Activated CD4-positive, alpha-beta T cell treated with anti-CD3 and anti-CD28 coated beads for 36 hours (primary cell): ENCODE measurements at regions of chr16 and their contacts with region 1.

Region 1: DNA sequence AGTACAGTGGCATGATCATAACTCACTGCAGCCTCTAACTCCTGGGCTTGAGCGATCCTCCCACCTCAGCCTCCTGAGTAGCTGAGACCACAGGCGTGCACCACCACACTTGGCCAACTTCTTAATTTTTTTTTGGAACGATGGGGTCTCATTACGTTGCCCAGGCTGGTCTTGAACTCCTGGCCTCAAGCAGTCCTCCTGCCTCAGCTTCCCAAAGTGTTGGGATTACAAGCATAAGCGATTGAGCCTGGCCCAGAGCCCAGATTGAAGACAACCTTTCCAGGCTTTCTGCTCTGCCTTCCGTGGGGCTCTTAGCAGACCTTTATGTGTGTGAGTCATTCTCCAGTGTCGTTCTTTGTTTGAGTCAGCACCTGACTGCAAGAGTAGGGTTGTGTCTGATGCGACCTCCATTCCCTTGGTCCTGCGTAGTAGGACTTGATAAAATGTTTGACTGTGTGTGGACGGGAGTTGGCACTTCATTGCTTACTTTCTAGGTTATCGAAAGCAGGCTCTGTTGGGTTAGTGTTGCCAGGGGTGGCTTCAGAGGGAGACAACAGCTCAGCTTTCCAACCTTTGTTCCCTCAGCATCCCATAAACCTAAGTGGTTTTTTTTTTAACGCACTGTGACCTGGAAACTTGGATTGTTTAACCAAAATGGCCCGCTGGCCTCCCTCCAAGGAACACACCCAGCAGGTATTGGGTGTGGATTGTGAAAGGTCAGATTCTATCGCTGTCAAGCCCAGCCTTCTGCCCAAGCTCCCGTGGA is 26.4 kb downstream of the EEF2K start:
- DNase-seq: peak; percentile 68
- ATAC-seq: peak; percentile 100
- H3K4me3 Mint-ChIP-seq: no peak overlapping the region
- H3K27ac Mint-ChIP-seq: peak overlapping the region; percentile 51
- H3K4me1 Mint-ChIP-seq: peaks cover 11% of the 10 kb centered on the region
- H3K27me3 Mint-ChIP-seq: no peaks in the 10 kb centered on the region

Region 2: DNA sequence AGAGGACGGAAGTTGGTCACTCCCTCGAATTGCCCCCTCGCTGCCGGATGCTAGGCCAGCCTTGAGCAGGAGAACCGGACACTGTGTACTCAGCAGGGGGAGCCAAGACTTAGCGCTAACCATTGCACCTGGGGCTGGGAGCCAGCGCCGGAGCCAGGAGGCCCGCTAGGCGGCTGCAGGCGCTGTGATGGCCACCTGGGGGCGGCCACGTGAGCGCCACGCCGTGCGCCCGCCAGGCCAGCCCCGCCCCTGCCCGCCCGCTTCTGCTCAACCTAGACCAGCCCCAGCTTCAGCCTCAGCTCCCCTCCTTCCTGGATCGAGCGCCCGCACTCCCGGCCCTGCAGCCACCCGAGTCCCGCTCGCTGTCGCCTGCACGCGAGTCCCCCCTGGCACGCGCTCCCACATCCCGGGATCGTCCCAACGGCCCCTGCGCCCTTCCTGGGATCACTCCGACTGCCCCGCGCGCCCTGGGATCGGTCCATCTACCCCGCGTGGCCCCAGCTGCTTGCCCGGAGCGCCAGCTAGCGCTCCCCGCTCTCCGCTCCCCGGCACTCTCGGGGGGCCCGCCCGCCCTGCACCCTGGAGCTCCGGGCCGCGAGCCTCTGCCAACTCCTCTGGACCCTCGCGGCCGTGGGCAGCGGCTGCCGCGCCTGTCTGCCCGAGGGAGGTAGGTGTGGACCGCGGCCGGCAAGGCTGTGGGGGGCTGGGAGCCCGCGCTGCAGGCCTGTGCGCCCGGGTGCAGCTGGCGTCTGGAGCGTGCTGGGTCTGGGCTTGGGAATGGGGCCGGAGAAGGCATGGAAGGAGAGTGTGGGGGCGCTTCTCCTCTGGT is 26.2 kb before region 1 on chr16 and contains the start of gene EEF2K:
- CTCF ChIA-PET with region 1: interaction called, 6 read pairs
- POLR2A ChIA-PET with region 1: no interaction called
- intact Hi-C with region 1: loop called in 1 of 2 experiments (anchors 1 kb)
- DNase-seq: peak; percentile 94
- ATAC-seq: peak; percentile 88
- H3K4me3 Mint-ChIP-seq: peak within 1 kb of the TSS; percentile 91
- H3K27ac Mint-ChIP-seq: peak within 1 kb of the TSS; percentile 89
- H3K4me1 Mint-ChIP-seq: peaks cover 36% of the 10 kb centered on the region
- H3K27me3 Mint-ChIP-seq: no peaks in the 10 kb centered on the region
- total RNA-seq, gene EEF2K: 23.9 to 28.3 TPM